IMR-90 (cell line): ENCODE measurements at regions of chr1 and their contacts with region 1.

Region 1: DNA sequence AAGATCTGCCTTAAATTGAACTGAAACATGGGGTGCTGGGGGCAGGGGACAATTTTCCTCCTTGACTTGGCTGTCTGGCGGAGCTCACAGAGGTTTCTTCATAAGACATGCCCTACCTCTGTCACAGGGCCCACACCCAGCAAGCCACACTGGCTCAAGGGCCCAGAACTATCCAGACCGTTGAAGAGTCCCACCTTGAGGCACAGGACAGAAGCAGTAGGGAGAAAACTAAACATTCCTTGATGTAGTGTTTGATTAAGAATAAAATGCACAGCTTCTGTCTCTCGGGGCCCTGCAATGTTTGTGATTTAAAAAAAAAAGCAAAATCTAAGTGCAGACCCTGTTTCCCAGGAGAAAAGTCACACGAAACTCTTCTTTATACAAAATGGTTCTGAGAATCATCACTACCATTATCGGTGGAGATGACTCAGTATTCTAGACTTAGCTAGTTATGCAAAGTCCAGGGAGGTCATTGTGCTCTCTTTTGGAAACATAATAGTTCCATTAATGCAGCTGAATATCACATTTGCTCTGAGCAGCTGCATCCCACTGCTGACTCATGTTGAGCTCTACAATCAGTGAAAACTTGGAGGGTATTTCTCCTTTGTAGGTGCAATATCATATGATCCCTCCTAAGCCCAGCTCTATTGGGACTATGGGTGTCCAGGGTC is 53.6 kb upstream of the DIRAS3 start:
- DNase-seq: peak; percentile 94
- ATAC-seq: peak; percentile 91
- H3K4me3 ChIP-seq: no peak overlapping the region
- H3K27ac ChIP-seq: peak overlapping the region; percentile 80
- H3K4me1 ChIP-seq: peaks cover 7% of the 10 kb centered on the region
- H3K27me3 ChIP-seq: no peaks in the 10 kb centered on the region
- CTCF ChIP-seq: no peak
- POLR2A ChIP-seq: no peak
- RAD21 ChIP-seq: peak; percentile 1; the same call in 1 of the 2 replicates

Region 2: GRCh38 chr1:67524143-67525052 is 579.6 kb before region 1 on chr1:
- CTCF ChIA-PET with region 1: interaction called, 4 read pairs
- POLR2A ChIA-PET with region 1: no interaction called
- dilution Hi-C with region 1: no loop called
- in situ Hi-C with region 1: loop called (anchors 10 kb)
- intact Hi-C with region 1: no loop called
- DNase-seq: no peak
- ATAC-seq: peak; percentile 40
- H3K4me3 ChIP-seq: no peak overlapping the region
- H3K27ac ChIP-seq: no peak overlapping the region
- H3K4me1 ChIP-seq: no peaks in the 10 kb centered on the region
- H3K27me3 ChIP-seq: peaks cover 6% of the 10 kb centered on the region; the same call in 1 of the 2 replicates
- CTCF ChIP-seq: 0 out of 2 replicates have a peak, but pooled peaks have one; percentile 22
- POLR2A ChIP-seq: no peak
- RAD21 ChIP-seq: no peak

Region 3: DNA sequence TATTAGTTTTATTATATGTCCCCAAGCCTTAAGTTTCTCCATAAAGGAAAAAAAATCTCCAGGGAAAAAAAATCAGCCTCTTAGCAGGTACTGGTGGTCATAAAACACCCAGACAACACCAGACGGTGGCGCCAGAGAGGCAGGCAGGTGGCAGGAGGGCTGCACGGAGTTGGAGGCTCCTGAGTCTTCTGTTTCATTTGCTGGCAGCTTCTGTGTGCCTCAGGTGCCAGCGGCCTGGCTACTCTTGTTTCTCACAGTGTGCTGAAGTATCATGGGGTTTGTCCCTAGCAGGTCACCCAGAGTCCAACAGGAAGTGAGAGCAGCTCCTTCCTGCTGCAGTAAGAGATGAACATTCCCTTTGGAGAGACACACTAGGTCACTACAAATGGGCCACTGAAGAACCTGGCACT is 542.3 kb before region 1 on chr1:
- CTCF ChIA-PET with region 1: no interaction called
- POLR2A ChIA-PET with region 1: no interaction called
- dilution Hi-C with region 1: no loop called
- in situ Hi-C with region 1: loop called (anchors 10 kb)
- intact Hi-C with region 1: no loop called
- DNase-seq: peak; percentile 85
- ATAC-seq: peak; percentile 82
- H3K4me3 ChIP-seq: no peak overlapping the region
- H3K27ac ChIP-seq: no peak overlapping the region
- H3K4me1 ChIP-seq: peaks cover 6% of the 10 kb centered on the region
- H3K27me3 ChIP-seq: no peaks in the 10 kb centered on the region
- CTCF ChIP-seq: peak; percentile 89
- POLR2A ChIP-seq: no peak
- RAD21 ChIP-seq: peak; percentile 92

Region 4: DNA sequence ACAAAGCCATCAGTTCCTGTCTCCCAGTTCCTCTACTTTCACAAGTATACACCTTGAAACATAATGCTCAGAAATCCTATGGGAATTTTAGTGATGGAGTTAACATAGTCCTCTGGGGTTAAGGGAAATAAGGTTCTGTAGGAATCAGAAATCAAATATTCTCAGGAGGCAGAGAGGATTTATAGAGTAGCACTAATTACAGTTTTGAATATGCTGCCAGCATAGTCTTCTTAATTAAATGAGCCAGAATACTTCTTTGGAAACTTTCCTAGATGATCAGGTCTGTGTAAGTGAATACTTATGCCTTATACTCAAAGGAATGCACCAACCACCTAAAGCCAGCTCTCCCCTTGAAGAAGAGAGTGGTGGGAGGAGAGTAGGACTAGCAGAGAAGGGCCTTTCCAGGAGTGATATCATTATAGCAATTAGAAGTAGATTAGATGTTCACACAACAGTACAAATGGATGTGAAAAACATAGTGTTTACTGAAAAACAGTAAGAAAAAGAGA is 22.2 kb before region 1 on chr1:
- CTCF ChIA-PET with region 1: no interaction called
- POLR2A ChIA-PET with region 1: no interaction called
- dilution Hi-C with region 1: no loop called
- in situ Hi-C with region 1: no loop called
- intact Hi-C with region 1: no loop called
- DNase-seq: peak; percentile 28
- ATAC-seq: peak; percentile 40; the same call in 1 of the 2 replicates
- H3K4me3 ChIP-seq: no peak overlapping the region
- H3K27ac ChIP-seq: no peak overlapping the region
- H3K4me1 ChIP-seq: no peaks in the 10 kb centered on the region
- H3K27me3 ChIP-seq: no peaks in the 10 kb centered on the region
- CTCF ChIP-seq: no peak
- POLR2A ChIP-seq: no peak
- RAD21 ChIP-seq: no peak

Region 5: GRCh38 chr1:68293609-68294366 is 189.8 kb after region 1 on chr1:
- CTCF ChIA-PET with region 1: no interaction called
- POLR2A ChIA-PET with region 1: no interaction called
- dilution Hi-C with region 1: no loop called
- in situ Hi-C with region 1: no loop called
- intact Hi-C with region 1: no loop called
- DNase-seq: peak; percentile 45
- ATAC-seq: peak; percentile 82
- H3K4me3 ChIP-seq: no peak overlapping the region
- H3K27ac ChIP-seq: peak overlapping the region; percentile 43
- H3K4me1 ChIP-seq: peaks cover 9% of the 10 kb centered on the region
- H3K27me3 ChIP-seq: no peaks in the 10 kb centered on the region
- CTCF ChIP-seq: no peak
- POLR2A ChIP-seq: no peak
- RAD21 ChIP-seq: no peak